ENCODE measurements at regions of chr1 and their contacts with region 1.

Region 1: GRCh38 chr1:16984717-16985116 is 4.3 kb upstream of the MFAP2 start:
- DNase-seq: no peak
- ATAC-seq: no peak
- H3K4me3 Mint-ChIP-seq: no peak overlapping the region
- H3K27ac Mint-ChIP-seq: no peak overlapping the region
- H3K4me1 Mint-ChIP-seq: peaks cover 8% of the 10 kb centered on the region
- H3K27me3 Mint-ChIP-seq: peaks cover 21% of the 10 kb centered on the region
- CTCF ChIP-seq: no peak

Region 2: DNA sequence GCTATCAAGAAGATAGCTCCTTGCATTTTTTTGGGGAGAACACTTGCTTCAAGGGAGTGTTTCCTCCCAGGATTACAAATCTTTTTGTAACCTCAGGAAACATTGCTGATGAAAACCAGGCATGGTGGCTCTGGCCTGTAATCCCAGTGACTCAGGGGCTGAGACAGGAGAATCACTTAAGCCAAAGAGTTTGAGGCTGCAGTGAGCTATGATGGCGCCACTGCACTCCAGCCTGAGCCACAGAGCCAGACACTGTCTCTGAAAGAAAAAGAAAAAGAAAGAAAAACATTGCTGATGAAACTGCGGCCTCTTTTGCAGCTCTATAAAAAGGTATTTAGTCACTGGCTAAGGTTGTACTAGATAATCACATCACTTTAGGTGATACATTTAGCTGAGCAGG is 81.7 kb before region 1 on chr1:
- CTCF ChIA-PET with region 1: no interaction called
- POLR2A ChIA-PET with region 1: no interaction called
- intact Hi-C with region 1: no loop called
- DNase-seq: no peak
- ATAC-seq: no peak
- H3K4me3 Mint-ChIP-seq: no peak overlapping the region
- H3K27ac Mint-ChIP-seq: no peak overlapping the region
- H3K4me1 Mint-ChIP-seq: peaks cover 43% of the 10 kb centered on the region
- H3K27me3 Mint-ChIP-seq: no peaks in the 10 kb centered on the region
- CTCF ChIP-seq: no peak

Region 3: DNA sequence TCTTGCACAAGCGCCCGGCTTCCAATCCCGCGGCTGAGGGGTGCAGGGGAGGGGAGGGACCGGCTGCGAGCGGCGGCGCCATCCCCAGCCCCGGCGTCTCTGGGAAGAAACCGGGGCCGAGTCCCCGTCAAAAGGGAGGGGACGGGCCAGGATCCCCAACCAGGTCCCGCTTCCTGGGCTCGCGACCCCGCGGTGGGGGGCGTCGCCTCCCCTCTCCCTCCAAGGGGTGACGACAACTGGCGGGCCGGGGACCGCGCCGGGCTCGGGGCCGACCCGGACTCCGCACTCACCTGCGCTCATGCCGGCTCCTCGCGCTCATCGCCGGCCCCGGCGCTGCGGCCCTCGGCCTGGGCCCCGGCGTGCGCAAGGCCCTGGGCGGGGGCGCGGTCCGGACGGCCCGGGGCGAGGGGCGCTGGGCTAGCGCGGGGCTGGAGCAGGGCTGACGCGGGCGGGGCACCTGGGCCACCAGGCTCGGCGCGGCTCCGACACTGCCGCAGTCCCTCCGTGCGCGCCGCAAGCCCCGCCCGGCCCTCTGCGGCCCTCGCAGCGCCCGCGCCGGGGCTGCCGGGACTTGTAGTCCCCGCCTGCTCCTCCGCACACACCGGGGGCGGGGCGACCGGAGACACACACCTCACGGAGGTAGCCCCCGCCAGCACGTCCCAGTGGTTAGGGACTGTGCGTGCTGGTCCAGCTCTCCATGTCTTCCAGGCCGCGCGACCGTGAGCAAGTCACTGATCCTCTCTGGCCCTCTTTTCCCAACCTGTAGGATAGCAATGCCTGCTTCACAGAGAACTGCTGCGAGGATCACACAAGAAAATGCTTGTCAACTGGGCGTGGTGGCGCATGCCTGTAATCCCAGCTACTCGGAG is 27.0 kb after region 1 on chr1 and contains the start of gene ATP13A2:
- CTCF ChIA-PET with region 1: no interaction called
- POLR2A ChIA-PET with region 1: interaction called, 10 read pairs
- intact Hi-C with region 1: no loop called
- DNase-seq: peak; percentile 87
- ATAC-seq: peak; percentile 99
- H3K4me3 Mint-ChIP-seq: peak within 1 kb of the TSS; percentile 81
- H3K27ac Mint-ChIP-seq: peak within 1 kb of the TSS; percentile 20
- H3K4me1 Mint-ChIP-seq: peaks cover 24% of the 10 kb centered on the region
- H3K27me3 Mint-ChIP-seq: no peaks in the 10 kb centered on the region
- CTCF ChIP-seq: no peak
- total RNA-seq, gene ATP13A2: 27.6 and 31.9 TPM in 2 replicates